ENCODE measurements at regions of chr10 and their contacts with region 1.

Region 1: DNA sequence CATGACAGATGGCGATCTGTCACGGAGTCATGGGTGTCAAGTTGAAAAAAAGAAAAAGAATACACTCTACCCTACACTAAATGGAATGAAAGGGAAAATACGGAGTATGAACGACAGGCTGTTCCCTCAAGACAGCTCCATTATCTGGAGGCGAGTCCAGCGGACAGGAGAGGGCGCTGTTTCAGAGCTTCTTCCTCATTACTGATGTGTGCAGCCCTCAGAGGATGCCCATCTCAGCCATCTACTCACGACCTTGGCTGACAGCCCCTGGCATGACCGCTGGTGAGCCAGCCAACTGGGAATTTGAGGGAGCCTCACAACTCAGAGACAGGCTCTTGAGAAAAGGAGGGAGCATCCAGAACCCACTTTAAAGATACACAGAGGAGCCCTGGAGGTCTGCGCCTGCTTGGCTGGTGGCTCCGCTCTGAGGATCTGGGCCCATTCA is 49.6 kb upstream of the SMNDC1 start:
- DNase-seq: peak; percentile 64 to 84
- ATAC-seq: peak; percentile 72 to 89 (median 85)
- H3K4me3 ChIP-seq: no peak overlapping the region
- H3K27ac ChIP-seq: peak overlapping the region in 1 of 10 donors; percentile 38
- H3K4me1 ChIP-seq: peaks cover 0 to 46% (median 9%) of the 10 kb centered on the region in 9 donors
- H3K27me3 ChIP-seq: peaks cover 0 to 8% (median 0%) of the 10 kb centered on the region in 7 donors
- CTCF ChIP-seq: peak; percentile 24 to 82 (median 75)

Region 2: GRCh38 chr10:110129490-110129889 is 224.9 kb before region 1 on chr10:
- intact Hi-C with region 1: no loop called
- DNase-seq: no peak
- ATAC-seq: no peak
- H3K4me3 ChIP-seq: no peak overlapping the region
- H3K27ac ChIP-seq: no peak overlapping the region
- H3K4me1 ChIP-seq: peaks cover 0 to 3% (median 0%) of the 10 kb centered on the region in 9 donors
- H3K27me3 ChIP-seq: no peaks in the 10 kb centered on the region
- CTCF ChIP-seq: no peak

Region 3: DNA sequence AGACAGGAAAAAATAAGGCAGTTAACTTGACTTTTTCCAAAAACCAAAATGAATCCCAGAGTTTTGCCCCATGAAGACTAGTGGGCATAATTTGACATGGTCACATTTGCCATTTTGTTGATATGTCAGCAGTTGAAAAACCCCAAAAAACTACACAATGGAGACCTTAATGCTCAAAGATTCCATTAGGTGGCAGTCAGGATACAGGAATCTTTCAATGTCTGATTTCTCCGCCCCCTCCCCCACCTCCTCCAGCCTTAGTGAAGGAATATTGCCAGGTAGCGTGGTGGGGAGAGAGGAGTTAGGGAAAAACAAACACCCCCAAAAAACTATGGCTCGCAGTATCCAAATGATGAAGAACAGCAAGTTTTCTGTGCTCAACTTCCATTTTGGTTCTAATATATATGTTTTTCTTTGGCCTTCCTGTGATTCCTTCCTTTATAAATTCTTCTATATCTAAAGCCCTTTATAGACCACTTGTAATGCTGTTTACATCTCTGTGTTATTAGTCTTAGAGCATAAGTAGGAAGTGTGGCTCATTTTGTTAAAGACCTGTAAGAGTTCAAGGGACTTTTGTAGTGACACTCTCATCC is 42.9 kb before region 1 on chr10:
- intact Hi-C with region 1: loop called in 4 of 10 experiments (anchors 5 kb)
- DNase-seq: peak; percentile 17 to 55
- ATAC-seq: peak in 7 of 8 donors; percentile 71 to 90 (median 80)
- H3K4me3 ChIP-seq: no peak overlapping the region
- H3K27ac ChIP-seq: peak overlapping the region in 2 of 10 donors; percentile 38 to 41
- H3K4me1 ChIP-seq: peaks cover 0 to 26% (median 1%) of the 10 kb centered on the region in 9 donors
- H3K27me3 ChIP-seq: no peaks in the 10 kb centered on the region
- CTCF ChIP-seq: peak; percentile 50 to 80 (median 66)

Region 4: GRCh38 chr10:110317866-110318850 is 36.2 kb before region 1 on chr10:
- intact Hi-C with region 1: loop called in 4 of 10 experiments (anchors 5 kb)
- DNase-seq: no peak
- ATAC-seq: no peak
- H3K4me3 ChIP-seq: no peak overlapping the region
- H3K27ac ChIP-seq: no peak overlapping the region
- H3K4me1 ChIP-seq: no peaks in the 10 kb centered on the region
- H3K27me3 ChIP-seq: no peaks in the 10 kb centered on the region
- CTCF ChIP-seq: no peak

Region 5: DNA sequence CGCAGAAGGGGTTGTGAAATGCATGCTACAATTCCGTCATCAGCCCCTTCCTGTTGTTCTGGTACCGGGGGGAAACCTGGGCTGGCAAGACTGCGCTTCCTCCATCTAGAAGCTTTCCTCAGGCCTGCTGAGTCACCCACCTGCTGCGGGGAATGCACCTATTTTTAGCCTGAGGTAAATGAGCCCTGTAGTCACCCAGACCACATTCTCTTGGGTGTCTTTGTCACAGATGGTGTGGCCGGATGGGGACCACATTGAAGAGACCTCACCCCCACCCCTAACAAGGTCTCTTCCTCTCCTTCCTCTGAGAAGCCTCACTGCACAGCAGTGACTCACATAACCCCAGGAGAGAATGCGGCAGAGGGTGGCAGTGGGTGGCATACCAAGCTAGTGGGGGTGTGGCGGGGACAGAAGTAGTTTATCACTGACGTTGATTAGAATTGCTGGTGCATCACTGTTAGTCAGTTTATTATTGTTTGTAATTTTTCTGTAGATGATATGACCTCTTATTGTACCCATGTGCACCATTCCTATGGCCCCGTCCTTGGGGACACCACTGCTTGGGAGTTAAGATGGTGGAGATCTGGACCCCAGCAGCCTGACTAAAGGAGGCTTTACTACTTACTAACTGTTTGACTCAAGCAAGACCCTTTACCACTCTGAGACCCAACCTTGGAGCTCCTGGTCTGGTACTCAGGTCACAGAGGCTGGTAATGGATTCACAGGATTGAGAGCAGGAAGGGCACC is 60.4 kb after region 1 on chr10:
- intact Hi-C with region 1: loop called in 1 of 10 experiments (anchors 5 kb)
- DNase-seq: no peak
- ATAC-seq: peak in 4 of 8 donors; percentile 15 to 44 (median 35)
- H3K4me3 ChIP-seq: no peak overlapping the region
- H3K27ac ChIP-seq: peak overlapping the region in 4 of 10 donors; percentile 35 to 55 (median 46)
- H3K4me1 ChIP-seq: peaks cover 0 to 51% (median 25%) of the 10 kb centered on the region in 9 donors
- H3K27me3 ChIP-seq: no peaks in the 10 kb centered on the region
- CTCF ChIP-seq: no peak

Region 6: DNA sequence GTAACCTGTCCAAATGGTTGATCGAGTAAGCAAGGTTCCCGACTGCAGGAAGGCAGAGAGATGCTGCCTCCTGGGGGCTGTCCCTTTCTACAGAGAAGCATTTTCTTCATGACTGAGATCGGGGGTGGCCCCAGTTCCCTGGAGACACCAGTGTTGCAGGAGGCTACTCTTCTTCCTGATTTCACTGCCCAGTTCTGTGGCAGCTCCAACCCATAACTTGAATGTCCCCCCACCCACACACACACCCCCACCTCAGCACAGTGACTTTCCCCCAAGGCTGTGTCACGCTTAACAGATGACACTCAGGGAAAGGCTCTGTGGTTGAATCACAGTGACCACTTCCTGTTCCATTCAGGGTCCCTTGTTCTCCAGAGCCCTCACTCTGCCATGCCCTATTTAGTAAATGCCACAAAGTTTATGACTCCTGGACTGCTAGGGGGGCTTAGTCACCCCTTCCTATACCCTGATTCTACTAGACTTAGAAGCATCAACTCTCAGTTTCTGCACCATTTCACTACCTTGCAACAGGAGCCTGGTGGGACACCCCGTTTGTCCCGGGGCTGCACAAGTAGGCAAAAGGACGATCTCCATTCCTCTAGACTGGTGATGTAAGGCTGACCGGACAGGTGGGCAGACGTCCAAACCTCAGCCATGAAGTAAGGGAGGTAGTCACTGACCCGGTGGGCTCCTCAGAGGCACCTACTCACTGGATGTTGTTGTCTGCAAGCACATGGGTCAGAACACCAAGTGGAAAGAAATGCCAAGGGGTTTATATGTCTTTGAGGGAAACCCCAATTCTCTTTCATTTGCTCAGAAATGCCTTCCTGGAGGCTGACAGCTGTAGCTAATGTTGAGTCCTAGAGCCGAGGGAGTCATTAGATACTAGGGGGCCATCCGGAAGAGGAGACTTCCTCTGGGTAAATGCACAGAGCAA is 181.9 kb after region 1 on chr10:
- intact Hi-C with region 1: loop called in 2 of 10 experiments (anchors 5 kb)
- DNase-seq: peak in 1 of 2 donors; percentile 43
- ATAC-seq: peak; percentile 54 to 86 (median 69)
- H3K4me3 ChIP-seq: no peak overlapping the region
- H3K27ac ChIP-seq: no peak overlapping the region
- H3K4me1 ChIP-seq: peaks cover 0 to 26% (median 5%) of the 10 kb centered on the region in 9 donors
- H3K27me3 ChIP-seq: no peaks in the 10 kb centered on the region
- CTCF ChIP-seq: peak in 7 of 9 donors; percentile 29 to 69 (median 60)

Region 7: GRCh38 chr10:110547139-110547761 is 192.9 kb after region 1 on chr10:
- intact Hi-C with region 1: loop called in 7 of 10 experiments (anchors 1 to 5 kb)
- DNase-seq: peak in 1 of 2 donors; percentile 12
- ATAC-seq: peak in 6 of 8 donors; percentile 66 to 80 (median 76)
- H3K4me3 ChIP-seq: no peak overlapping the region
- H3K27ac ChIP-seq: no peak overlapping the region
- H3K4me1 ChIP-seq: peaks cover 0 to 14% (median 0%) of the 10 kb centered on the region in 9 donors
- H3K27me3 ChIP-seq: peaks cover 0 to 15% (median 0%) of the 10 kb centered on the region in 7 donors
- CTCF ChIP-seq: peak; percentile 72 to 88 (median 81)